CD8-positive, alpha-beta memory T cell (primary cell): ENCODE measurements at regions of chr10 and their contacts with region 1.

Region 1: GRCh38 chr10:13099666-13100348 is at the start of gene OPTN:
- DNase-seq: peak; percentile 76 to 84 (median 79)
- H3K4me3 ChIP-seq: peak within 1 kb of the TSS; percentile 63
- H3K4me3 Mint-ChIP-seq: peak within 1 kb of the TSS; percentile 86 to 97 (median 93)
- H3K27ac ChIP-seq: peak within 1 kb of the TSS; percentile 89
- H3K27ac Mint-ChIP-seq: peak within 1 kb of the TSS; percentile 92 to 99 (median 97)
- H3K4me1 ChIP-seq: peaks cover 31% of the 10 kb centered on the region
- H3K4me1 Mint-ChIP-seq: peaks cover 41 to 56% (median 53%) of the 10 kb centered on the region in 3 donors
- H3K27me3 ChIP-seq: no peaks in the 10 kb centered on the region
- H3K27me3 Mint-ChIP-seq: no peaks in the 10 kb centered on the region
- total RNA-seq, gene OPTN: 53.4 to 55.3 TPM

Region 2: GRCh38 chr10:12981570-12981969 is 118.2 kb before region 1 on chr10:
- CTCF ChIA-PET with region 1: no interaction called
- POLR2A ChIA-PET with region 1: no interaction called
- DNase-seq: no peak
- H3K4me3 ChIP-seq: no peak overlapping the region
- H3K4me3 Mint-ChIP-seq: no peak overlapping the region
- H3K27ac ChIP-seq: no peak overlapping the region
- H3K27ac Mint-ChIP-seq: no peak overlapping the region
- H3K4me1 ChIP-seq: no peaks in the 10 kb centered on the region
- H3K4me1 Mint-ChIP-seq: no peaks in the 10 kb centered on the region
- H3K27me3 ChIP-seq: no peaks in the 10 kb centered on the region
- H3K27me3 Mint-ChIP-seq: peaks cover 3 to 29% of the 10 kb centered on the region in 2 donors

Region 3: GRCh38 chr10:13110908-13111307 is 11.1 kb after region 1 on chr10:
- CTCF ChIA-PET with region 1: interaction called, 27 read pairs
- POLR2A ChIA-PET with region 1: interaction called, 12 read pairs
- DNase-seq: no peak
- H3K4me3 ChIP-seq: no peak overlapping the region
- H3K4me3 Mint-ChIP-seq: no peak overlapping the region
- H3K27ac ChIP-seq: no peak overlapping the region
- H3K27ac Mint-ChIP-seq: peak overlapping the region in 6 of 8 donors; percentile 29 to 91 (median 82)
- H3K4me1 ChIP-seq: peaks cover 38% of the 10 kb centered on the region
- H3K4me1 Mint-ChIP-seq: peaks cover 53 to 56% (median 55%) of the 10 kb centered on the region in 3 donors
- H3K27me3 ChIP-seq: no peaks in the 10 kb centered on the region
- H3K27me3 Mint-ChIP-seq: no peaks in the 10 kb centered on the region